Activated T-helper 1 cell treated with anti-CD3 and anti-CD28 coated beads, Interleukin-12 subunit alpha, Interleukin-12 subunit beta, Interleukin-2, Interleukin-4 antibody, amounts not matched to agents 30 ng/mL and 10 ng/mL and 1 ng/mL, durations not matched to agents 14 hours and 24 hours and 36 hours (primary cell): ENCODE measurements at regions of chr3 and their contacts with region 1.

Region 1: DNA sequence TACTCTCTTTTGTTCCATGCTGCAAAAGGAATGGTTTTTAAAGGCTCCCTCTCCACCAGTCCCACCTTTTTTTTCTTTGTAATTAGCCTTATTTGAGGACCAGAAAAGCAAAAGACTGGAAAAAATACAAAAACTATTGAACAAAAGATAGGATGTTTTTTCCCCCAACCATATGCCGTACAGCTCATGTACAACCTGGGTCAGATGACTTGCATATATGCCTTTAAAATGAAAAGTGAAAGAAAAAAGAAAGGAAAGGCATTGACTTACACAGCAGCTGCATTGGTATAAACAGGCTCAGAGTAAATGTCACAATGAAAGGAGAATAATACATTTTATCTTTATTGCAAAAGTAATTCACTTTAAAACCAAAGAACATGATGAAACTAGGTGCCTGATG is 69.5 kb upstream of the CMC1 start:
- DNase-seq: no peak
- H3K4me3 Mint-ChIP-seq: peak overlapping the region; percentile 15
- H3K27ac Mint-ChIP-seq: peak overlapping the region; percentile 84
- H3K4me1 Mint-ChIP-seq: peaks cover 13% of the 10 kb centered on the region
- H3K27me3 Mint-ChIP-seq: peaks cover 2% of the 10 kb centered on the region

Region 2: DNA sequence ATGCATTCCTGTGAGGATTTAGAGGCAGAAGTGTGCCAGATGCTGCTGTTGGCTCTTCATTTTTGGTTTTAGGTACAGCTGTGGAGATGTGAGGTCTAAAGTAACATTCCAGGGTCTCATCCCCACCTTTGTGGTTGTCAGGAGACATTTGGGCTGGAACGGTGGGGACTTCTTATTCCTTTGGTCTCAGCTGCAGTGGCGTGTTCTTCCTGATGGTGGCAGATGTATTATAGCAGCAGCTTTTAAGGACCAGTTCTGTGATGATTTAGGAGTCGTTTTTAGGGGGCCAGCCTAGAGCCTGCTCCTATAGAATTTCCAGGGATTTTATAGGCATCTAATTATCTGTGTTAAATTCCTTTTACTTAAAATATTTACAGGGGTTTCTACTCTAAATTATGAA is 228.9 kb before region 1 on chr3:
- intact Hi-C with region 1: no loop called
- DNase-seq: no peak
- H3K4me3 Mint-ChIP-seq: no peak overlapping the region
- H3K27ac Mint-ChIP-seq: no peak overlapping the region
- H3K4me1 Mint-ChIP-seq: no peaks in the 10 kb centered on the region
- H3K27me3 Mint-ChIP-seq: peaks cover 2% of the 10 kb centered on the region

Region 3: DNA sequence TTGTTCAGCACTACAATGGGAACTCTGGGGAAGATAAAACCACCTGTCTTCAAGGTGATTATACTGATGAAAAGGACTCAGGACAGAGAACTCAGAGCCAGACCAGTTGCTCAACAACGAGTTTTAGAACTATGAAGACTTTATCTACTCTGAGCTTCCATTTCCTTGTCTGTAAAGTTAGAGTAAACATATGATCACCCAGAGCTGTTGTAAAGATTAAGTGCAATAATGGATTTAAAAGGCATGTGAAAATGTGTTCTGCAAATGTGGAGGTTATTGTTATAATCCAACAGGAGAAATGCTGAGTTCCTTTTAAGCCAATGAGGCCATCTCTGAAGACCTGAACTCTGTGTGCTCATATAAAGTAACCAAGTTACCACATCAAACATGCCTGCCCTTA is 70.3 kb before region 1 on chr3:
- intact Hi-C with region 1: no loop called
- DNase-seq: no peak
- H3K4me3 Mint-ChIP-seq: no peak overlapping the region
- H3K27ac Mint-ChIP-seq: no peak overlapping the region
- H3K4me1 Mint-ChIP-seq: no peaks in the 10 kb centered on the region
- H3K27me3 Mint-ChIP-seq: no peaks in the 10 kb centered on the region

Region 4: DNA sequence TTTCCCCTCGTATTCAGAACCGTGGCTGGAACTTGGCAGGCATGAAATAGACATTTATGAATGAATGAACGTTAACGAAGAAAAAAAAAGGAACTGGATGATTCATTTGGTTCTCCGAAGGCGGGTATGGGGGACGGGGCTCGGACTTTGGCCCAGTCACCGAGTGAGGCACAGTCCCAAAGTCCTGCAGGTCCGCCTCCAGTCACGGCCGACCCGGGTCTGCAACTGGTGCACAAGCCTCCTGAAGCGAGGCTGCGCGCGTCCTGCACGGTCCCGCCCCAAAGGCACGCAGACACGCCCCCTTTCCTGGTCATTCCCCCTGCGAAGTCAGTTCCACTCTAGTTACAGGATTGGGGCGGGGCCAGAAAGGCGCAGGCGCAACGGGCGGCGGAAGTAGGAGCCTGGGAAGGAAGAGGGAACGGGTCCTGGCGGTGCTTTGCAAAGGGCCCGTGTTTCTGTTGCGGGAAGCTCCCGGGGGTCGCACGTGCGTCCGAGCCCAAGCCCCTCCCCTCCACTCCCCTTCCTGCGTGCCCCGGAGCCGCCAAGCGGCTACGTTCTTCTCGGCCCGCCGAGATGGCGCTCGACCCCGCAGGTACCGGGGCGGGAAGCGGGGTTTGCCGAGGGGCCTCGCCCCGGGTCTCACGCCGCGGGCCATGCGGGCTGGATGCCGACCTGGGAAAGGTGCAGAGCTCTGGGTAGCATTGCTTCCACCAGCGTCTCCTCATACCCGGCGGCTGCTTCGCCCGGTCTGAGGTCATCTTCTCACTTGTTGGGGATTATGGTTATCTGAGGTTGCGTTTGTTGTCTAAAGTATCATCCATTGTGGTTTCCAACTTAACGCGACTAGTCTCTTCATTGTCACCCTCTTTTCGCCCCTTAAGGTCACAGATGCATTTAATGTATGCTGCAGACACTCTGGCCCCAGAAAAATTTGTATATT is 69.5 kb after region 1 on chr3 and contains the start of gene CMC1:
- intact Hi-C with region 1: loop called (anchors 2 kb)
- DNase-seq: peak; percentile 87
- H3K4me3 Mint-ChIP-seq: peak within 1 kb of the TSS; percentile 94
- H3K27ac Mint-ChIP-seq: peak within 1 kb of the TSS; percentile 96
- H3K4me1 Mint-ChIP-seq: peaks cover 37% of the 10 kb centered on the region
- H3K27me3 Mint-ChIP-seq: no peaks in the 10 kb centered on the region
- total RNA-seq, gene CMC1: 29.5 and 32.5 TPM in 2 replicates

Region 5: GRCh38 chr3:28317438-28318022 is 145.6 kb after region 1 on chr3:
- intact Hi-C with region 1: loop called (anchors 5 kb)
- DNase-seq: peak; percentile 31
- H3K4me3 Mint-ChIP-seq: no peak overlapping the region
- H3K27ac Mint-ChIP-seq: no peak overlapping the region
- H3K4me1 Mint-ChIP-seq: peaks cover 28% of the 10 kb centered on the region
- H3K27me3 Mint-ChIP-seq: no peaks in the 10 kb centered on the region